Activated naive CD4-positive, alpha-beta T cell treated with anti-CD3 and anti-CD28 coated beads for 36 hours (primary cell): ENCODE measurements at regions of chr3 and their contacts with region 1.

Region 1: DNA sequence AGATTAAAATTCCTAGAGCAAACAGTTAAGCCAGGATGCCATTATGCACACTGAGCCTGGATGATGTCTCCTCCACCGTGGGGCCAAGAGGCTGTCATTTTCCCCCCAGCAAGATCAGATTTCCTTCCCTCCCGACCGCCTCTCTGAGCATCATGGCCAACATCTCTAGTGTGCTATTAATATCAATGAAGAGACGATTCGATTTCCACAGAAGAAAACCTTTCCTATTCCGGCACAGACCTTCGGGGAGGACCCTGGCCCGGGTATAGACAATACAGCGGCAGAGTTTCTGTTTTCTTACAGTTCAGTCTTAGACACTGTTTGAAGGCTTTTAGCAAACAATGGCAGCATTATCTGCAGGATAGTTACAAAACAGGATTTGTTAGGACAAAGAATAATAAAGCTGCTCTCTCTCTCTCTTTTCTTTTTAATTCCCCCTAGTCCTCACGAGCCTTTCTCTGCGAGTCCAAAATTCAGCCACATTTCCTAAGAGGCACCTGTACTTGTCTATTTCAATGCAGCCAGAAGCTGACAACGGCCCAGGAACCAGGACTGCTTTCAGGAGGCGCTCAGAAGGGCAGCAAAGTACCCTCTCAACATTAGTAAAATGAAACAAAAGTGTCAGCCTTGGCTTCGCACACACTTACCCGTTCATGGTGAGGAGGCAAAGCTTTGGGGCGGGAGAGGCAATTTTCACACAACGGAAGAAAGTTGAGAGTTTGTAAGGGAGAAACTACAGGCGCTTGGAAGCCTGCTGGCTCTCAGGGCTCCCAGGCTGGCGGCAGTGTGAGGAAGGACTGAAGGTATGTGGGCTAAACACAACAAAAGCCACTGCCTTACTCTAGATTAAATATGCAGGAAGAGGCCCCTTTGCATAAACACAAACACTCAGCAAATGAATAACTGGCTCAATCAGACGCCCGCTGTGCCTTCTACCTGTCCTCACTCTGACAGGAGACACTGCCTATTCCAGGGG is 278.0 kb downstream of the FOXP1 start:
- DNase-seq: peak; percentile 44
- H3K4me3 Mint-ChIP-seq: peak overlapping the region; percentile 90
- H3K27ac Mint-ChIP-seq: peak overlapping the region; percentile 94
- H3K4me1 Mint-ChIP-seq: peaks cover 61% of the 10 kb centered on the region
- H3K27me3 Mint-ChIP-seq: no peaks in the 10 kb centered on the region

Region 2: GRCh38 chr3:70531063-70531657 is 774.4 kb before region 1 on chr3:
- CTCF ChIA-PET with region 1: no interaction called
- intact Hi-C with region 1: loop called (anchors 1 kb)
- DNase-seq: no peak
- H3K4me3 Mint-ChIP-seq: no peak overlapping the region
- H3K27ac Mint-ChIP-seq: no peak overlapping the region
- H3K4me1 Mint-ChIP-seq: no peaks in the 10 kb centered on the region
- H3K27me3 Mint-ChIP-seq: peaks cover 1% of the 10 kb centered on the region

Region 3: GRCh38 chr3:70856414-70857162 is 448.9 kb before region 1 on chr3:
- CTCF ChIA-PET with region 1: no interaction called
- intact Hi-C with region 1: loop called (anchors 2 kb)
- DNase-seq: peak; percentile 10
- H3K4me3 Mint-ChIP-seq: no peak overlapping the region
- H3K27ac Mint-ChIP-seq: no peak overlapping the region
- H3K4me1 Mint-ChIP-seq: peaks cover 28% of the 10 kb centered on the region
- H3K27me3 Mint-ChIP-seq: peaks cover 23% of the 10 kb centered on the region

Region 4: GRCh38 chr3:71064288-71064955 is 241.1 kb before region 1 on chr3:
- CTCF ChIA-PET with region 1: interaction called, 7 read pairs
- intact Hi-C with region 1: loop called (anchors 1 kb)
- DNase-seq: peak; percentile 69
- H3K4me3 Mint-ChIP-seq: no peak overlapping the region
- H3K27ac Mint-ChIP-seq: no peak overlapping the region
- H3K4me1 Mint-ChIP-seq: peaks cover 51% of the 10 kb centered on the region
- H3K27me3 Mint-ChIP-seq: no peaks in the 10 kb centered on the region

Region 5: GRCh38 chr3:71226565-71227269 is 78.8 kb before region 1 on chr3:
- CTCF ChIA-PET with region 1: interaction called, 9 read pairs
- intact Hi-C with region 1: loop called (anchors 1 kb)
- DNase-seq: peak; percentile 95
- H3K4me3 Mint-ChIP-seq: peak overlapping the region; percentile 77
- H3K27ac Mint-ChIP-seq: peak overlapping the region; percentile 94
- H3K4me1 Mint-ChIP-seq: peaks cover 83% of the 10 kb centered on the region
- H3K27me3 Mint-ChIP-seq: no peaks in the 10 kb centered on the region

Region 6: GRCh38 chr3:71360764-71361163 is 55.2 kb after region 1 on chr3:
- CTCF ChIA-PET with region 1: no interaction called
- intact Hi-C with region 1: loop called (anchors 1 kb)
- DNase-seq: peak; percentile 43
- H3K4me3 Mint-ChIP-seq: peak overlapping the region; percentile 48
- H3K27ac Mint-ChIP-seq: peak overlapping the region; percentile 70
- H3K4me1 Mint-ChIP-seq: peaks cover 82% of the 10 kb centered on the region
- H3K27me3 Mint-ChIP-seq: no peaks in the 10 kb centered on the region

Region 7: DNA sequence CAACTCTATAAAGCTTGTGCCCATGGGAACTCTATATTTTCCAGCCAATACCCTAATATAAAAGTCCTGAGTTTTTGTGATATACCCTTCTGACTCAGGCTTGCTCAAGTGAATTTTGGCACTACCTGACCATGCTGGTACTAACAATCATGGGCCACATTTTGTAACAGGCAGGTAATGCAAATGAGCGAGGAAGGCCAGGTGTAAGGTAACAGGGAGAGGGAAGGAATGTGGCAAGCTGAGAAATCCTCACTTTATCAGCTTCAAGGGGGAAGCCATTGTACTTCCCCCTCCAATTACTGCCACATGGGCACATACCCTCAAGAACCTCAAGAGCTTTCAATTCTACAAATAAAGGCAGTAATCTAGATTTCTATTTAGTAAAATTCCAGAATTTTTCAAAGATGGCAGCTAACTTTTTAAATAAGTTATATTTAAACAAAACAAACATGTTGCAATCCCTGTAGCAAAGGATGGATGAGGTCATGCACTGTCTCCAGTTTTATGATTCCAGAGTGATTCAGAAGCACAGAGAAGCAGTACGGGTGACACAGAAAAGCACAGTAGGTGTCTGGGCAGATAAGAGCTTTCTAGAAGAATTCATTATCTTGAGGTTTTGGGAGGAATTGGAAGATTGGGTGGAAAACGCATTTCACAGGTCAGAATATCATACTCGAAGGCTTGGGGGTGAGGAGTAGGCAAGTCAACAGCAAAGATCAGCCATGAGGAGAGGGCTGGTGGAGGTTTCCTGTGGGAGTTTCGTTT is 190.4 kb after region 1 on chr3:
- CTCF ChIA-PET with region 1: no interaction called
- intact Hi-C with region 1: loop called (anchors 1 kb)
- DNase-seq: peak; percentile 43
- H3K4me3 Mint-ChIP-seq: peak overlapping the region; percentile 49
- H3K27ac Mint-ChIP-seq: peak overlapping the region; percentile 73
- H3K4me1 Mint-ChIP-seq: peaks cover 83% of the 10 kb centered on the region
- H3K27me3 Mint-ChIP-seq: no peaks in the 10 kb centered on the region